ENCODE measurements at regions of chr7 and their contacts with region 1.

Region 1: GRCh38 chr7:138008547-138009349 is 6.9 kb upstream of the CREB3L2 start:
- DNase-seq: peak; percentile 46
- ATAC-seq: peak; percentile 33
- H3K4me3 Mint-ChIP-seq: no peak overlapping the region
- H3K27ac Mint-ChIP-seq: no peak overlapping the region
- H3K4me1 Mint-ChIP-seq: peaks cover 4% of the 10 kb centered on the region
- H3K27me3 Mint-ChIP-seq: peaks cover 2% of the 10 kb centered on the region

Region 2: DNA sequence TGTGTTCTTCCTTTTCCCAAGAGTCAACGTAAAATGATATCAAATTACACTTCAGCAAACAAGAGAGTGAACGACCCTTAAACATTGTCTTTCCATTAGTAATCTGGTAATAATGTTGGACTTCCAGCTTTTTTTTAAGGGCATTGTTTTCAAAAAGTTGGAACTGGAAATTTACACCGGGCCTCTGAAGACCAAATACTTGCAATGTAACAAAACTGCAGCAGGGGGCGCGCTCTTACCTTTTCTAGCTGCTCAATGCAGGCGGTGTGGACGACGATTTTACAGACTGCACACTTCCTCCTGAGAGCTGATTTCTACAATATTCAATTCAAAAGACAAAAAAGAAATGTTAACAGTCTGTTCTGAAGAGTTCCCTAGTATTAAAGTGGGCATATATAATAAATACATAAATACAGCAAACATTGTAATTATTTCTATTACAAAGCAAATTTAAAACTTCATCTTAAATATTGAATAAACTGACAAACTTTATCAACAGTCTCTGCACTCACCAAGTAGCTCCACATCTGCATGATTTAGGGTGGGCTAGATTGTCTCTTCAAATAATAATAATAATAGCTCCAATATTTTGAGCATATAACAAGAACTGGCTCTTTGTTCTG is 352.4 kb before region 1 on chr7:
- CTCF ChIA-PET with region 1: interaction called, 25 read pairs
- DNase-seq: peak; percentile 73
- ATAC-seq: peak; percentile 47
- H3K4me3 Mint-ChIP-seq: no peak overlapping the region
- H3K27ac Mint-ChIP-seq: no peak overlapping the region
- H3K4me1 Mint-ChIP-seq: no peaks in the 10 kb centered on the region
- H3K27me3 Mint-ChIP-seq: peaks cover 9% of the 10 kb centered on the region

Region 3: DNA sequence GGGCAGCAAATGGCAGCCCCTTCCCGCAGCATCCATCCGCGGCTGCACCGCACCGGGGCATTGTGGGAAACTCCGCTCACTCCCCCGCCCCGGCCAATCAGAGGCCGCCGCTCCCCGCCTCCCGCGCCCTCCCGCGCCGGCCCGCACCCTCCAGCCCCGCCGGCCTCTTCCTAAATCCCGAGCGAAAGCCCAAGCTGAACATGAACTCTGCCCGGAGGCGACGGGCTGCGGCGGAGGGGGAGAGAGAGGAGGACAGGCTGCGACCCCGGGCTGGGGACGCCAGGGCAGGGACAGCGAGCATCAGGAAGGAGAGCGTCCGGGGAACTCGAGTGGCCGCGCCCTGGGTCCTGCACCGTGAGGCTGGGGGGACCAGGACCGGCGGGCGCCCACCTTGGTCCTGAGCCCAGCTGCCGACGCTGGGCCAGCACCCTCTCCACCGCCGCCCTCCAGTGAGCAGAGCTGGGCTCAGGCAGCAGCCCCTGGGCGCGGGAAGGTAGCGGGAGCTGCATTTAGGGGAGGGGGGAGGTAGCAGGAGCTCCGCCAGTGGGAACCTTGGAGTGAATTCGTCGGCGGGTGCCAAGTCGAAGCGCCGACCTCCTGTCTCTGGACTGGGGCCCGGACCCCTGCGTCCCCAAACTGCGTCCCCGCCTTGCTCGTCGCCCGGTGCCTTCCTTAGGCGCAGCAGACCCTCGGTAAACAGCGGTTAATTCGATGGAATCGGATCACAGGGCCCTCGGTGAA is 161.8 kb before region 1 on chr7 and contains the start of gene DGKI:
- CTCF ChIA-PET with region 1: no interaction called
- DNase-seq: no peak
- ATAC-seq: peak; percentile 56
- H3K4me3 Mint-ChIP-seq: peak within 1 kb of the TSS; percentile 41
- H3K27ac Mint-ChIP-seq: no peak within 1 kb of the TSS
- H3K4me1 Mint-ChIP-seq: peaks cover 7% of the 10 kb centered on the region
- H3K27me3 Mint-ChIP-seq: peaks cover 82% of the 10 kb centered on the region
- total RNA-seq, gene DGKI: 2.2 TPM in 1 of 2 experiments, not detected in the other

Region 4: DNA sequence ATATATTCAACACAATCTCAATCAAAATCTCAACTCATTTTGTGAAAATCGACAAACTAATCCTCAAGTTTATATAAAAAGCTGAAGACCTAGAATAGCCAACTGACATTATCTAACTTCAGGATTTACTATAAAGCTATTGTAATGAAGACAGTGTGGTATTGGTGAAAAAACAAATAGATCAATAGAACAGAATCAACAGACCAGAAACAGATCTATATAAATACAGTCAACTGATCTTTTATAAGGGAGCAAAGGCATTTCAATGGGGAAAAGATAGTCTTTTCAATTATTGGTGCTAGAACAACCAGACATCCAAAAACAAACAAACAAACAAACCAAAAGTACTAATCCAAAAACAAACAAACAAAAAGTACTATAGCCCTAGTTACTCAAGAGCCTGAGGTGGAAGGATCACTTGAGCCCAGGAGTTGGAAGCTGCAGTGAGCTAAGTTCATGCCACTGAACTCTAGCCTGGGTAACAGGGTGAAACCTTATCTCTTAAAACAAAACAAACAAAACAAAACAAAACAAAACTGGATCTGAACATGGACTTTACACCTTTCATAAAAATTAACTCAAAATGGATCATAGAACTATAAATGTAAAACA is 40.9 kb after region 1 on chr7:
- CTCF ChIA-PET with region 1: no interaction called
- DNase-seq: no peak
- ATAC-seq: no peak
- H3K4me3 Mint-ChIP-seq: no peak overlapping the region
- H3K27ac Mint-ChIP-seq: no peak overlapping the region
- H3K4me1 Mint-ChIP-seq: no peaks in the 10 kb centered on the region
- H3K27me3 Mint-ChIP-seq: peaks cover 12% of the 10 kb centered on the region

Region 5: DNA sequence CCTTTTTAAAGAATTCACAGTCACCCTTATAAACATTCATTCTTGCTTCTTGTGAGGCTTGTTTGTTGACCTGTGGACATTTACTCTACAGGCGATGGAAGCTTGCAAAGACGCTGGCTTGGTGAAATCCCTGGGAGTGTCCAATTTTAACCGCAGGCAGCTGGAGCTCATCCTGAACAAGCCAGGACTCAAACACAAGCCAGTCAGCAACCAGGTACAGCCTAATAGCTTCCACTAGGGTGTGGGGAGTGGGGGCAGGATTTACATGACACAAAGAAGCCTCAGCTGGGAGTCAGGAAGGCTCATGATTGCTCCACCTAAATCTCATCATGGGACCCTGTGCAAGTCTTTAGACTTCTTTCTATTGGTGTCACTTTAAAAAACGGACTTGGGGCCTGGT is 96.5 kb after region 1 on chr7:
- CTCF ChIA-PET with region 1: no interaction called
- DNase-seq: no peak
- ATAC-seq: no peak
- H3K4me3 Mint-ChIP-seq: no peak overlapping the region
- H3K27ac Mint-ChIP-seq: no peak overlapping the region
- H3K4me1 Mint-ChIP-seq: no peaks in the 10 kb centered on the region
- H3K27me3 Mint-ChIP-seq: peaks cover 13% of the 10 kb centered on the region

Measured in activated CD8-positive, alpha-beta memory T cell treated with anti-CD3 and anti-CD28 coated beads, Interleukin-2, amount 10 ng/mL, durations not matched to agents 7 days and 5 days (primary cell).